Activated naive CD4-positive, alpha-beta T cell treated with anti-CD3 and anti-CD28 coated beads, Interleukin-2, amount 10 ng/mL, durations not matched to agents 7 days and 5 days (primary cell): ENCODE measurements at regions of chr15 and their contacts with region 1.

Region 1: GRCh38 chr15:98177924-98178592 is 217.6 kb downstream of the ARRDC4 start:
- DNase-seq: peak; percentile 55
- H3K4me3 Mint-ChIP-seq: no peak overlapping the region
- H3K27ac Mint-ChIP-seq: no peak overlapping the region
- H3K4me1 Mint-ChIP-seq: peaks cover 2% of the 10 kb centered on the region
- H3K27me3 Mint-ChIP-seq: peaks cover 38% of the 10 kb centered on the region

Region 2: DNA sequence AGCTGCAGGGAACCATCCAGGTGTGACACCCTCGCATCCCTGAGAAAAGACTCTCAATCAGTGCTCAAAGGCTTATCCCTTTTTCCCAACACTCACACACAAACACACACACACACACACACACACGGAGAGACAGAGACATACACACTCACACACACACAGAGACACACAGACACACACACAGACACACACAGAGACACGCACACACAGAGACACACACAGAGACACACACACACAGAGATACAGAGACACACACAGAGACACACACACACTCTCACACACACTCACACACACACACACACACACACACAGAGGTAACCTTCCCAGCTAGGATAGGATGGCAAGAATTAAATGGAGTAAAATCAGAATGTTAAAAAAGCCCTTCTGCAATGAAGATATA is 280.6 kb before region 1 on chr15:
- CTCF ChIA-PET with region 1: interaction called, 56 read pairs
- DNase-seq: no peak
- H3K4me3 Mint-ChIP-seq: no peak overlapping the region
- H3K27ac Mint-ChIP-seq: no peak overlapping the region
- H3K4me1 Mint-ChIP-seq: no peaks in the 10 kb centered on the region
- H3K27me3 Mint-ChIP-seq: no peaks in the 10 kb centered on the region

Region 3: GRCh38 chr15:97903971-97904572 is 274.0 kb before region 1 on chr15:
- CTCF ChIA-PET with region 1: interaction called, 56 read pairs
- DNase-seq: peak; percentile 41
- H3K4me3 Mint-ChIP-seq: no peak overlapping the region
- H3K27ac Mint-ChIP-seq: no peak overlapping the region
- H3K4me1 Mint-ChIP-seq: no peaks in the 10 kb centered on the region
- H3K27me3 Mint-ChIP-seq: peaks cover 25% of the 10 kb centered on the region

Region 4: GRCh38 chr15:97909291-97909891 is 268.7 kb before region 1 on chr15:
- CTCF ChIA-PET with region 1: interaction called, 56 read pairs
- DNase-seq: peak; percentile 68
- H3K4me3 Mint-ChIP-seq: no peak overlapping the region
- H3K27ac Mint-ChIP-seq: no peak overlapping the region
- H3K4me1 Mint-ChIP-seq: no peaks in the 10 kb centered on the region
- H3K27me3 Mint-ChIP-seq: peaks cover 10% of the 10 kb centered on the region

Region 5: DNA sequence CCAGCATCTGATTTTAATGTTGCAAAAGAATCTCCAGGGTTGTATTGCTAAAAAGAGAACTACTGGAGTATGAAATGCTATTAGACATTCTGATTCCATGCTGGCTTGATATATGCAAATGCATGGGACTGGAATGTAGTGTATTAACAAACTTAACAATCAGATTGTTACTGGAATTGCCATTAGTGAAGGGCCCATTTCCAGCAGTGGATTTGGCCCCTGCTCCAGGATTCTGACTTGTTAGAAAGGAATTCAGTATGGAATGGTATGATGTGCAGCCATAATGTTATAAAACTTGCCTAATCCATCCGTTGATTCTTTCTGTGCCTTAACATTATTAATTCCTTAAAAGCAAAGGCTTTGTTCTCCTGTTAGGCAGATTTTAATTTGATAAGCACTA is 209.7 kb before region 1 on chr15:
- CTCF ChIA-PET with region 1: no interaction called
- DNase-seq: no peak
- H3K4me3 Mint-ChIP-seq: no peak overlapping the region
- H3K27ac Mint-ChIP-seq: no peak overlapping the region
- H3K4me1 Mint-ChIP-seq: no peaks in the 10 kb centered on the region
- H3K27me3 Mint-ChIP-seq: peaks cover 3% of the 10 kb centered on the region

Region 6: DNA sequence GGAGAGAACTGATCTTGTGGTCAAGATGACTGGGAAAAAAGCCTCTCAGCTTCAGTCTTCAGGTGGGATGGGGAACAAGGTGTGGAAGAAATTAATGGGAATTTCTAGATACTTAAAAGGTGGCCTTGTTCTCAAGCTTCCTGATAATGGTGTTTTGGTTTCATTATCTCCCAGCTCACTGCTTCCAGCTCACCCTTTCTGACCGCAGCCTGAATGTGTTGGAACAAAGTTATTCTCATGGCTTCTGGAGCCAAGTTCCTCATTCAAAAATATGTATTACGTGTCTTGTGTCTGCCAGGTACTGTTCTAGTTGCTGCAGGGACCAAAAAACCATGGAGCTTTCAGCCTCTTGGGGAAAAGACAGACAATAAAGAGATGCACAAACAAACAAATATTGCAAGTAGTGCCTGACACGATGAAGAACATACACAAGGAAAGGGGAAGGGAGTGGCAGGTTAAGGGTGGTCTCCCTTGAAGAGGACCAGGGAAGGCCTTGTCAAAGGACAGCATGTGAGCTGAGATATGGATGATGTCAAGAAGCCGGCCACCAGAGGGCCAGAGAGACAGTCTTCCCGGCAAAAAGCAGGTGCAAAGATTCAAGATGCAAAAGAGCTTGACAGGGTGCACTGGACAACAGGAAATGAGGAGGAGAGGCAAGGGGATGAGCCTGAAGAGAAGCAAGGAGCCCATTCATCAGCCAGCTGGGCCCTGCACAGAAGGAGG is 182.0 kb before region 1 on chr15:
- CTCF ChIA-PET with region 1: interaction called, 12 read pairs
- DNase-seq: no peak
- H3K4me3 Mint-ChIP-seq: no peak overlapping the region
- H3K27ac Mint-ChIP-seq: no peak overlapping the region
- H3K4me1 Mint-ChIP-seq: peaks cover 12% of the 10 kb centered on the region
- H3K27me3 Mint-ChIP-seq: no peaks in the 10 kb centered on the region

Region 7: GRCh38 chr15:98142572-98142971 is 35.5 kb before region 1 on chr15:
- CTCF ChIA-PET with region 1: interaction called, 12 read pairs
- DNase-seq: no peak
- H3K4me3 Mint-ChIP-seq: no peak overlapping the region
- H3K27ac Mint-ChIP-seq: no peak overlapping the region
- H3K4me1 Mint-ChIP-seq: peaks cover 3% of the 10 kb centered on the region
- H3K27me3 Mint-ChIP-seq: peaks cover 8% of the 10 kb centered on the region

Region 8: GRCh38 chr15:98226578-98226977 is 48.5 kb after region 1 on chr15:
- CTCF ChIA-PET with region 1: no interaction called
- DNase-seq: no peak
- H3K4me3 Mint-ChIP-seq: no peak overlapping the region
- H3K27ac Mint-ChIP-seq: no peak overlapping the region
- H3K4me1 Mint-ChIP-seq: no peaks in the 10 kb centered on the region
- H3K27me3 Mint-ChIP-seq: no peaks in the 10 kb centered on the region

Region 9: DNA sequence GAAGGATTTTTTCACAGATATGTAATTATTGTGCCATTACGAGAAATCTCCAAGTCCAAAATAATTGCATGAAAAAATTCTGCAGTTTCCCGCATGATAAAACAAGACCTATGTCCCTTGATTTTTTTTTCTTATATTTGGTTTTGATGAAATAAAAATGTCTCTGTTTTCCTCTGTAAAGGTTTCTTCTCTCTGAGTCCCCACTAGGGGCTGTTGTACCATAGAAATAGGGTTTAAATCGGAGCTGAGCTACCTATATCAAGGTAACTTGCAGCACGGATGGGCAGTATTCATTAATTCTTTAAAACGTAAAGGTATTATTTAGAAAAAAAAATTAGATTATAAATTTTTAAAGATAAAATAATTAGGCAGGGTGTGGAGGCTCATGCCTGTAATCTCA is 403.7 kb after region 1 on chr15:
- CTCF ChIA-PET with region 1: no interaction called
- DNase-seq: no peak
- H3K4me3 Mint-ChIP-seq: no peak overlapping the region
- H3K27ac Mint-ChIP-seq: no peak overlapping the region
- H3K4me1 Mint-ChIP-seq: peaks cover 15% of the 10 kb centered on the region
- H3K27me3 Mint-ChIP-seq: peaks cover 60% of the 10 kb centered on the region